IMR-90 (cell line): ENCODE measurements at regions of chr1 and their contacts with region 1.

Region 1: GRCh38 chr1:3237994-3238702 is 169.1 kb downstream of the PRDM16 start:
- DNase-seq: no peak
- ATAC-seq: no peak
- H3K4me3 ChIP-seq: no peak overlapping the region
- H3K27ac ChIP-seq: no peak overlapping the region
- H3K4me1 ChIP-seq: no peaks in the 10 kb centered on the region
- H3K27me3 ChIP-seq: no peaks in the 10 kb centered on the region; the same call in 1 of the 2 replicates
- CTCF ChIP-seq: no peak
- POLR2A ChIP-seq: no peak
- RAD21 ChIP-seq: no peak

Region 2: DNA sequence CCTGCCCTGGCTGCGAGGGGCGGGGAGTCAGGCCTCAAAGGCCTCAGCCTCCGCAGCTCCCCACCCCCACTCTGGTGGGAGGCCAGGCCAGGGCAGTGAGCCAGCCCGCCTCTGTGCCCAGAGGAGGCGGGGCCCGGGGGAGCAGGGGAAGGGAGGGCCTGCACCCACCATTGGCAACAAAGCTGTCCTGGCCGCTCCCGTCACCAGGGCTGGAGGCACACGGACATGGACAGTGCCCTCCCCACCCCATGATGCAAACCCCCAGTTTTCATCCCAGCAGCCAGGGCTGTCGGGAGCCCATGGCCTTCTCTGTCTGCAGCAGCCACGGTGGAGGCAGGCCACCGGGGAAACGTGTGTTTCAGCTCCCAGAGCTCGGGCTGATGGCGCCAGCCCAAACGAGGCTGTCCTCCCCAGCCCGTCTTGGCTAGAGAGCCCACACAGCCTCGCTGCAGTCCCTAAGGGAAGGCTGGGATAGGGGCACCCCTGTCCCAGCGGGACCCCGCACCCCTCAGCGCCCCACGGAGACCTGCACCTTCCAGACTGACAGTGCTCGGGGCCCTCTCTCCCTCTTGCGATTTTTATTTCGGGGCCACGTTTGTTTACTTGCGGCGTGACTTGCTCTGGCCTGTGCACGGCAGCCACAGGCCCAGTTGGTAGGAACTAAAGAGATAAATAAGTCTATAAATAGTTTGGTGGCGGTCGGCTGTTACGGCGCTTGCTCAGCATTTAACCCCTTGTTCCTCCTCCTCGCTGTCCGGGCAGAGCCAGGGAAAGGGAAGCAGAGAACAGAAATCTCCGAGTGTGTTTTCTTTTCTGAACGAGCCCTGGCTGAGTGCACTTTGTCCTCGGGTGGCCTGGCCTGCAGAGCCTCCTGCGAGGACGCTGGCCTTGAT is 67.3 kb before region 1 on chr1:
- CTCF ChIA-PET with region 1: no interaction called
- POLR2A ChIA-PET with region 1: no interaction called
- dilution Hi-C with region 1: no loop called
- in situ Hi-C with region 1: loop called (anchors 10 kb)
- intact Hi-C with region 1: no loop called
- DNase-seq: no peak
- ATAC-seq: peak; percentile 24
- H3K4me3 ChIP-seq: no peak overlapping the region
- H3K27ac ChIP-seq: no peak overlapping the region
- H3K4me1 ChIP-seq: peaks cover 6% of the 10 kb centered on the region; the same call in 1 of the 2 replicates
- H3K27me3 ChIP-seq: no peaks in the 10 kb centered on the region
- CTCF ChIP-seq: no peak
- POLR2A ChIP-seq: no peak
- RAD21 ChIP-seq: no peak